ENCODE measurements at regions of chrX and their contacts with region 1.

Region 1: GRCh38 chrX:72100824-72101351 is 30.8 kb downstream of the RTL5 start:
- DNase-seq: peak; percentile 85 to 89 (median 88)
- H3K4me3 ChIP-seq: peak overlapping the region; percentile 40 to 42
- H3K4me3 Mint-ChIP-seq: peak overlapping the region; percentile 91 to 97 (median 96)
- H3K27ac ChIP-seq: peak overlapping the region; percentile 71
- H3K27ac Mint-ChIP-seq: peak overlapping the region; percentile 92 to 99 (median 98)
- H3K4me1 ChIP-seq: peaks cover 75% of the 10 kb centered on the region
- H3K4me1 Mint-ChIP-seq: peaks cover 42 to 79% (median 62%) of the 10 kb centered on the region in 4 donors
- H3K27me3 ChIP-seq: no peaks in the 10 kb centered on the region
- H3K27me3 Mint-ChIP-seq: no peaks in the 10 kb centered on the region

Region 2: GRCh38 chrX:72045552-72046277 is 55.2 kb before region 1 on chrX:
- CTCF ChIA-PET with region 1: interaction called, 6 read pairs
- POLR2A ChIA-PET with region 1: interaction called, 4 read pairs
- intact Hi-C with region 1: loop called (anchors 2 kb)
- DNase-seq: no peak
- H3K4me3 ChIP-seq: no peak overlapping the region
- H3K4me3 Mint-ChIP-seq: peak overlapping the region; percentile 28 to 86 (median 56)
- H3K27ac ChIP-seq: no peak overlapping the region
- H3K27ac Mint-ChIP-seq: peak overlapping the region in 6 of 7 donors; percentile 21 to 95 (median 72)
- H3K4me1 ChIP-seq: peaks cover 60% of the 10 kb centered on the region
- H3K4me1 Mint-ChIP-seq: peaks cover 35 to 82% (median 57%) of the 10 kb centered on the region in 4 donors
- H3K27me3 ChIP-seq: no peaks in the 10 kb centered on the region
- H3K27me3 Mint-ChIP-seq: no peaks in the 10 kb centered on the region

Region 3: DNA sequence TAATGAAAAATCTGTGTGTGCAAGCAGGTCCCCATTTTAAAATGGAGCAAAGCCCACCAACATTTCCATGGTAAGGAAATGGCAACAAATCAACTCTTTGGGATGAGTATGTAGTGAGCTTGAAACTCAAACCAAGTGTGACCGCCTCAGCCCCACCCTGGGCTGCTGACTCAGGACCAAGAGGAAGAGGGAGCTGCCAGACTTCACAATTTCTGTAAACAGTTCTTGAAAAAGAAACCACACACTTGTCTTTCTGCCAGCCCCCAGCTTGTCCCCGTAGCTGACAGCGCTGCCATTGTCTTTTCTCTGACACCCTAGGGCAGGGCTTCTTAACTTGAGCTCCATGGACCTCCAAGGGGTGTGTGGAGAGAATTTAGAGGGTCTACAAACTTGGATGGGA is 20.5 kb after region 1 on chrX:
- CTCF ChIA-PET with region 1: interaction called, 11 read pairs
- POLR2A ChIA-PET with region 1: interaction called, 116 read pairs
- intact Hi-C with region 1: loop called (anchors 1 kb)
- DNase-seq: peak; percentile 44 to 63 (median 46)
- H3K4me3 ChIP-seq: peak overlapping the region in 1 of 2 donors; percentile 9
- H3K4me3 Mint-ChIP-seq: peak overlapping the region; percentile 28 to 74 (median 58)
- H3K27ac ChIP-seq: peak overlapping the region; percentile 32
- H3K27ac Mint-ChIP-seq: peak overlapping the region; percentile 79 to 94 (median 88)
- H3K4me1 ChIP-seq: peaks cover 74% of the 10 kb centered on the region
- H3K4me1 Mint-ChIP-seq: peaks cover 40 to 81% (median 59%) of the 10 kb centered on the region in 4 donors
- H3K27me3 ChIP-seq: no peaks in the 10 kb centered on the region
- H3K27me3 Mint-ChIP-seq: no peaks in the 10 kb centered on the region

Region 4: GRCh38 chrX:72216973-72217372 is 116.1 kb after region 1 on chrX:
- CTCF ChIA-PET with region 1: no interaction called
- POLR2A ChIA-PET with region 1: no interaction called
- intact Hi-C with region 1: no loop called
- DNase-seq: no peak
- H3K4me3 ChIP-seq: no peak overlapping the region
- H3K4me3 Mint-ChIP-seq: no peak overlapping the region
- H3K27ac ChIP-seq: no peak overlapping the region
- H3K27ac Mint-ChIP-seq: no peak overlapping the region
- H3K4me1 ChIP-seq: no peaks in the 10 kb centered on the region
- H3K4me1 Mint-ChIP-seq: no peaks in the 10 kb centered on the region
- H3K27me3 ChIP-seq: no peaks in the 10 kb centered on the region
- H3K27me3 Mint-ChIP-seq: no peaks in the 10 kb centered on the region